CD8-positive, alpha-beta T cell (primary cell): ENCODE measurements at regions of chr13 and their contacts with region 1.

Region 1: DNA sequence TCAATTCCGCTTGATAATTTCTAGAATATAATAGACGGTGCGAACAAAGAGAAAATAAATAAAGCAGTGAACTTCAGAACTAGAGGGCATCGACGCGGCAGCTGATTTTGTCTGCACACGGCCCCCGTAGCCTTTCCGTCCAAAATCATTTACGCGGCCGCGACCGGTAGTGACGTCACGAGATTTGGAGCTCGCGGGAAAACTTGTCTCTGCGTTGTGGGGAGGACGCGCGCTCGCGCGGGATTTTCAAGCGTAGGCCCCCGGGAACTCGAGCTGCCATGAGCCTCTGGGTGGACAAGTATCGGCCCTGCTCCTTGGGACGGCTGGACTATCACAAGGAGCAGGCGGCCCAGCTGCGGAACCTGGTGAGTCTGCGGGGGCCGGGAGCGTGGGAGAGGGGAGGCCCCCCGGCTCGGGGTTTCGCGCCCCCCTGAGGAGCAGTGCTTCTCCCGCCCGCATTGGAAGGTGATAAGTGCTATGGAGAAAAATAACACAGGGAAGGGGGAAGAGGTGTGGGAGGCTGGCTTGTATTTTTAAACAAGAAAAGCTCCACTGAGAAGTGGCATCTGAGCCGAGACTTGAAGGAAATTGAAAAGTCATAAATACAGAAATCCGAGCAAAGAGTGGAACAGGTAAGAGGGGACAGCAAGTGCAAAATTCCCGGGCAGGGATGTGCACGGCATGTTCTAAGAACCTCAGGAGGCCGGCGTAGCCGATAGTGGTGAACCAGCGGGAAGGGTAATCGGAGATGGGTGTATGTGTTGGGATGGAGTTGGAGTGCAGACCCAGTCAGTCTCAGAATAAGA is at the start of gene RFC3:
- DNase-seq: peak; percentile 81 to 95 (median 90)
- ATAC-seq: peak; percentile 86
- H3K4me3 ChIP-seq: peak within 1 kb of the TSS; percentile 72 to 74
- H3K4me3 Mint-ChIP-seq: peak within 1 kb of the TSS; percentile 93
- H3K27ac ChIP-seq: peak within 1 kb of the TSS; percentile 63 to 64
- H3K27ac Mint-ChIP-seq: peak within 1 kb of the TSS; percentile 88
- H3K4me1 ChIP-seq: peaks cover 8% of the 10 kb centered on the region
- H3K4me1 Mint-ChIP-seq: peaks cover 16% of the 10 kb centered on the region
- H3K27me3 ChIP-seq: no peaks in the 10 kb centered on the region
- H3K27me3 Mint-ChIP-seq: peaks cover 4% of the 10 kb centered on the region
- CTCF ChIP-seq: no peak
- total RNA-seq, gene RFC3: 5.8 to 6.2 TPM

Region 2: DNA sequence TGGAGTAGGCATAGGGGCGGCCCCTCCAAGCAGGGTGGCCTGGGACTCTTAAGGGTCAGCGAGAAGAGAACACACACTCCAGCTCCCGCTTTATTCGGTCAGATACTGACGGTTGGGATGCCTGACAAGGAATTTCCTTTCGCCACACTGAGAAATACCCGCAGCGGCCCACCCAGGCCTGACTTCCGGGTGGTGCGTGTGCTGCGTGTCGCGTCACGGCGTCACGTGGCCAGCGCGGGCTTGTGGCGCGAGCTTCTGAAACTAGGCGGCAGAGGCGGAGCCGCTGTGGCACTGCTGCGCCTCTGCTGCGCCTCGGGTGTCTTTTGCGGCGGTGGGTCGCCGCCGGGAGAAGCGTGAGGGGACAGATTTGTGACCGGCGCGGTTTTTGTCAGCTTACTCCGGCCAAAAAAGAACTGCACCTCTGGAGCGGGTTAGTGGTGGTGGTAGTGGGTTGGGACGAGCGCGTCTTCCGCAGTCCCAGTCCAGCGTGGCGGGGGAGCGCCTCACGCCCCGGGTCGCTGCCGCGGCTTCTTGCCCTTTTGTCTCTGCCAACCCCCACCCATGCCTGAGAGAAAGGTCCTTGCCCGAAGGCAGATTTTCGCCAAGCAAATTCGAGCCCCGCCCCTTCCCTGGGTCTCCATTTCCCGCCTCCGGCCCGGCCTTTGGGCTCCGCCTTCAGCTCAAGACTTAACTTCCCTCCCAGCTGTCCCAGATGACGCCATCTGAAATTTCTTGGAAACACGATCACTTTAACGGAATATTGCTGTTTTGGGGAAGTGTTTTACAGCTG is 1502.7 kb before region 1 on chr13 and contains the starts of genes BRCA2 and ZAR1L:
- CTCF ChIA-PET with region 1: no interaction called
- POLR2A ChIA-PET with region 1: no interaction called
- intact Hi-C with region 1: loop called (anchors 2 kb)
- DNase-seq: peak; percentile 73 to 95 (median 88)
- ATAC-seq: peak; percentile 90
- H3K4me3 ChIP-seq: peak within 1 kb of the TSS; percentile 80 to 81
- H3K4me3 Mint-ChIP-seq: peak within 1 kb of the TSS; percentile 93
- H3K27ac ChIP-seq: peak within 1 kb of the TSS; percentile 99
- H3K27ac Mint-ChIP-seq: peak within 1 kb of the TSS; percentile 100
- H3K4me1 ChIP-seq: peaks cover 4% of the 10 kb centered on the region
- H3K4me1 Mint-ChIP-seq: peaks cover 14% of the 10 kb centered on the region
- H3K27me3 ChIP-seq: no peaks in the 10 kb centered on the region
- H3K27me3 Mint-ChIP-seq: no peaks in the 10 kb centered on the region
- CTCF ChIP-seq: no peak
- total RNA-seq, gene BRCA2: 2.6 to 3.6 TPM
- total RNA-seq, gene ZAR1L: not detected

Region 3: GRCh38 chr13:33787051-33787591 is 31.0 kb before region 1 on chr13:
- CTCF ChIA-PET with region 1: interaction called, 3 read pairs
- POLR2A ChIA-PET with region 1: no interaction called
- intact Hi-C with region 1: loop called in 1 of 2 experiments (anchors 2 kb)
- DNase-seq: peak in 2 of 9 experiments; percentile 46 to 65
- ATAC-seq: peak; percentile 62
- H3K4me3 ChIP-seq: peak overlapping the region; percentile 60 to 63
- H3K4me3 Mint-ChIP-seq: peak overlapping the region; percentile 86
- H3K27ac ChIP-seq: peak overlapping the region; percentile 36 to 82
- H3K27ac Mint-ChIP-seq: peak overlapping the region; percentile 75
- H3K4me1 ChIP-seq: peaks cover 6% of the 10 kb centered on the region
- H3K4me1 Mint-ChIP-seq: peaks cover 14% of the 10 kb centered on the region
- H3K27me3 ChIP-seq: no peaks in the 10 kb centered on the region
- H3K27me3 Mint-ChIP-seq: no peaks in the 10 kb centered on the region
- CTCF ChIP-seq: no peak

Region 4: DNA sequence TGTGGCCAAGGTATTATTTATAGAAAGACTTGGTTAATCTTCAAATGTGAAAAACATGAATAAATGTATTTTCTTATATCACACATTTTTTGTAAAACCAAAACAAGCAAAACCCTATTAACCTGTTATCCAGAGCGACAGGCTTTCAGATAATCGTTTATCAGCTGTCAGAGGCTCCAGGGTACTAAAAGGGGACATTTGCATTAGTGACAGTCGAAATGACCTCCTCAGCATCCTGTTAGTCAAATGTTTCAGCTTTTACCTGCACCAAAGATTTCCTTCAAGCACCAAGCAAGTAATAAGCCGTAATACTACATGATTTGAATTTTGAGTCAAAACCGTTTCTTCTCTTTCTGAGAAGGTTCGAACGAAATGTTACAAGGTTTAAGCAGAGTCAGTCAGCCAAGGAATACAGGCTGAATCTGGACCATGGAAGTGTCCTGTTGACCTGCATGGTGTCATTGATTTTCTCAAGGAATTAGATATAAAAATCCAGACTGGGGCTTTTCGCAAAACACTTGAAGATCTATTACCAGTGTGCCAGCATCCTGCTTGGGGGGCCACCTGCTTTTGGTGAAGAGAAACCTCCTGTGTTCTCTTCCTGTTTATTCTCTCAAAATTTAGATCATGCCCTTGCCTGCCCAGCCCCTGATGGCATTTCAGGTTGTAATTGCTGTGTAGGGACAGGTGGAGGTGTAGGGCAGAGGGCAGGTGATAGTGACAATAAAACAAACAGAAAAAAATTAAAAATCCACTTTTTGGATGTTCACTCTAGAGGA is 11.4 kb before region 1 on chr13:
- CTCF ChIA-PET with region 1: no interaction called
- POLR2A ChIA-PET with region 1: interaction called, 10 read pairs
- intact Hi-C with region 1: no loop called
- DNase-seq: no peak
- ATAC-seq: no peak
- H3K4me3 ChIP-seq: no peak overlapping the region
- H3K4me3 Mint-ChIP-seq: no peak overlapping the region
- H3K27ac ChIP-seq: no peak overlapping the region
- H3K27ac Mint-ChIP-seq: no peak overlapping the region
- H3K4me1 ChIP-seq: no peaks in the 10 kb centered on the region
- H3K4me1 Mint-ChIP-seq: no peaks in the 10 kb centered on the region
- H3K27me3 ChIP-seq: no peaks in the 10 kb centered on the region
- H3K27me3 Mint-ChIP-seq: peaks cover 19% of the 10 kb centered on the region
- CTCF ChIP-seq: no peak